Right ventricle myocardium superior (tissue), 1 donor: ENCODE measurements at regions of chr17 and their contacts with region 1.

Region 1: GRCh38 chr17:21126645-21127510 is at the start of gene DHRS7B:
- DNase-seq: peak; percentile 98
- ATAC-seq: peak; percentile 98
- total RNA-seq, gene DHRS7B: 22.4 TPM

Region 2: DNA sequence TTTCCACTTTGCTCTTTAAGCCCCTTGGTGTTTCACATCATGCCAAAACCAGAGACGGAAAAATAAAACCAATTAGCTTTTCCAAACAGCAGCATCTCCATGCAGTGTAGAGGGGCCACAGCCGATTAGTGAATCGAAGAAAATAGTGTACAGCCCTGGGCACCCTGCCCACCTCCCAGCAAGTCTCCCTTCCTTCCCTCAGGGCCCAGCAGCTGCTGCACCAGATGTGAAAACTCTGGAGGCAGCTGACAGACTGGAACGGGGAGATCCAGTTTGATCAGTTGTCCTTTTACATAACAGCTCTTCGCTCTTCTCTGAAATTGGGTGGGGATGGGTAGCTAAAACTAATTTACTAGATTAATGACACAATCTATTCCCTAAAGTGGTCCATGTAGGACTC is 67.8 kb after region 1 on chr17:
- intact Hi-C with region 1: no loop called
- DNase-seq: peak; percentile 70
- ATAC-seq: peak; percentile 68

Region 3: GRCh38 chr17:21214015-21214776 is 87.3 kb after region 1 on chr17 and contains the start of gene TMEM11:
- intact Hi-C with region 1: loop called (anchors 10 kb)
- DNase-seq: peak; percentile 98
- ATAC-seq: peak; percentile 95
- total RNA-seq, gene TMEM11: 31.9 TPM

Region 4: GRCh38 chr17:21252796-21253645 is 126.1 kb after region 1 on chr17 and contains the start of gene NATD1:
- intact Hi-C with region 1: loop called (anchors 2 kb)
- DNase-seq: peak; percentile 95
- ATAC-seq: peak; percentile 85
- total RNA-seq, gene NATD1: 19.1 TPM

Region 5: DNA sequence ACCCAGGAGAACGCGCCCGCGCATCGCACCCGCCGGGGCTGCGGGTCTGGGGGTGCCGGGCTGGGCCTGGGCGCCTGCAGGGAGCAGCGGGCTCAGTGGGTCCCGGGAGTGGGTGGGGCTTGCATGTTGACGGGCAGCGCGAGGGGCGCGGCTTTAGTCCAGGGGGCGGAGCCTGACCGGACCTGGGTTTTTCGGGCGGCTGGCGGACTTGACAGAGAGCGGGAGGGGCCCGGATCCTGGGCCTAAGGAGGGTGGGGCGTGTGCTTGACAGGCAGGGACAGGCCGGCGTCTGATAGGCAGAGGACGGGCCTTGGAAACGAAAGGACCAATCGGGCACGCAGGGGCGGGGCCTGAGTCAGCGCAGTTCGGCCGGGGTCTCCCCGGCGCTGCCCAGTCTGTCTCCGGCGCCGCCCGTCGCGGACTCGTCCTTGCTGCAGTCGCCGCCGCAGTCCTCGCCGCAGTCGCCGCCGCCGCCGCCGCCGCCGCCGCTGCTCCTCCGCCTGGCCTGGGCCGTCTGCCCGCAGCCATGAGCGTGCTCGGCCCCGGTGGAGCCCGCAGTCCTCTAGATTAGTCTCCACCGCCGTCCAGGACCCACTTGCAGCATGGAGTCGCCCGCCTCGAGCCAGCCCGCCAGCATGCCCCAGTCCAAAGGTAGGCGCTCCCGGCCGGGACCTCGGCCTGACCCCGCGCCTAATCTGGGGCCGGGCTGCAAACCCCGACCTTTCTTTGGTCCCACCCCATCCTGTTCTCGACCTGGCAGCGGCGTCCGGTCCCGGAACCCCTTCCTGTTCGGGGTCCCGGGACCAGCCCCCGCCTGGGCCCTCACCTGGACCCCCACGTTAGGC is 157.7 kb after region 1 on chr17 and contains the start of gene MAP2K3:
- intact Hi-C with region 1: loop called (anchors 2 kb)
- DNase-seq: peak; percentile 99
- ATAC-seq: peak; percentile 85
- total RNA-seq, gene MAP2K3: 30.8 TPM

Region 6: GRCh38 chr17:21457051-21458026 is 330.5 kb after region 1 on chr17:
- intact Hi-C with region 1: loop called (anchors 5 kb)
- DNase-seq: peak; percentile 94
- ATAC-seq: peak; percentile 97

Region 7: DNA sequence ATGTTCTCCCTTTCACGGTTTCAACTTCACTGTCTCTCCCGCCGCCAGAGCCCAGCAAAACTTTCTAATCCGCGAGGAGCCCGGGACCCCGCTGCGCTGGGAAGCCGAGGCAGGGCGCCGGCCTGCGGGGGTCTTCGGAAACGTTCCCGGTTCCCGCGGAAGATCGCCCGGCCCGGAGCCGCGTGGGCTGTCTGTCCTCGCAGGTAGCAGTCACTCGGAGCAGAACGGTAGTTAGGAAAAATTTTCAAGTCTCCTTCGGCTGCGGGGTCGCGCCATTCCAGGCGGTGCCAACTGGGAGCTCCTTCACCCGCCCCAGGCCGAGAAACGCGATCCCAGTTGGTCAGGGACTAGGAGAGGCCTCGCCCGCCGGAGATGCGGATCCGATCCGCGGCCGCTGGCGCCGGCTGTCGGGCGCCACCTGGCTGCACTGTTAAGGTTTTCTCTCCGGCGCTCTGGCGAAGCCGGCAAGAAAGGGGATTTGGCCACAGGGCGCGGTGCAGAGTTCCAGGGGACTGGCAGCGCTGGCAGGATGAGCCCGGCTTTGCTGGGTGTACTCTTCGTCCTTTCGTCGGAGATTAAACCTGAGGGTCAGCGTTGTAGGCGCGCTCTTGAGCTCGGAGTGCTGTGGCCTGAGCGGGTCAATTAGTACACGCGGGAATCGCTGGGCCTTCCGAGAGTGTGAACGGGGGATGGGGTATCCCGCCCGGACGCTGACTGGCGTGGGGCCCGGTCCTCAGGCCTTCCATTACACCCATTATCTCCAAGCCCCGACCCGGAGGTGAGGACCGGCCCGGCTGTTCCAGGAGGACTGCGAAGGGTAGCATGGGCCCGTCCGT is 384.7 kb after region 1 on chr17:
- intact Hi-C with region 1: loop called (anchors 5 kb)
- DNase-seq: peak; percentile 91
- ATAC-seq: peak; percentile 99